CD8-positive, alpha-beta T cell (primary cell): ENCODE measurements at regions of chr7 and their contacts with region 1.

Region 1: GRCh38 chr7:143408686-143409561 is at the start of gene EPHA1:
- DNase-seq: peak; percentile 14 to 77 (median 52)
- ATAC-seq: peak; percentile 71
- H3K4me3 ChIP-seq: peak within 1 kb of the TSS; percentile 56 to 58
- H3K4me3 Mint-ChIP-seq: peak within 1 kb of the TSS; percentile 95
- H3K27ac ChIP-seq: peak within 1 kb of the TSS; percentile 22 to 38
- H3K27ac Mint-ChIP-seq: peak within 1 kb of the TSS; percentile 91
- H3K4me1 ChIP-seq: peaks cover 48% of the 10 kb centered on the region
- H3K4me1 Mint-ChIP-seq: peaks cover 57% of the 10 kb centered on the region
- H3K27me3 ChIP-seq: peaks cover 0 to 2% of the 10 kb centered on the region in 2 experiments
- H3K27me3 Mint-ChIP-seq: no peaks in the 10 kb centered on the region
- CTCF ChIP-seq: no peak
- total RNA-seq, gene EPHA1: 8.3 to 13.1 TPM

Region 2: GRCh38 chr7:143287935-143288826 is 120.7 kb before region 1 on chr7 and contains the start of gene CASP2:
- CTCF ChIA-PET with region 1: interaction called, 3 read pairs
- POLR2A ChIA-PET with region 1: interaction called, 3 read pairs
- intact Hi-C with region 1: loop called in 1 of 2 experiments (anchors 5 kb)
- DNase-seq: peak; percentile 96 to 100 (median 99)
- ATAC-seq: peak; percentile 96
- H3K4me3 ChIP-seq: peak within 1 kb of the TSS; percentile 91 to 95
- H3K4me3 Mint-ChIP-seq: peak within 1 kb of the TSS; percentile 93
- H3K27ac ChIP-seq: peak within 1 kb of the TSS; percentile 64 to 72
- H3K27ac Mint-ChIP-seq: peak within 1 kb of the TSS; percentile 91
- H3K4me1 ChIP-seq: peaks cover 40% of the 10 kb centered on the region
- H3K4me1 Mint-ChIP-seq: peaks cover 53% of the 10 kb centered on the region
- H3K27me3 ChIP-seq: no peaks in the 10 kb centered on the region
- H3K27me3 Mint-ChIP-seq: no peaks in the 10 kb centered on the region
- CTCF ChIP-seq: peak; percentile 31
- total RNA-seq, gene CASP2: 16.0 to 19.1 TPM

Region 3: DNA sequence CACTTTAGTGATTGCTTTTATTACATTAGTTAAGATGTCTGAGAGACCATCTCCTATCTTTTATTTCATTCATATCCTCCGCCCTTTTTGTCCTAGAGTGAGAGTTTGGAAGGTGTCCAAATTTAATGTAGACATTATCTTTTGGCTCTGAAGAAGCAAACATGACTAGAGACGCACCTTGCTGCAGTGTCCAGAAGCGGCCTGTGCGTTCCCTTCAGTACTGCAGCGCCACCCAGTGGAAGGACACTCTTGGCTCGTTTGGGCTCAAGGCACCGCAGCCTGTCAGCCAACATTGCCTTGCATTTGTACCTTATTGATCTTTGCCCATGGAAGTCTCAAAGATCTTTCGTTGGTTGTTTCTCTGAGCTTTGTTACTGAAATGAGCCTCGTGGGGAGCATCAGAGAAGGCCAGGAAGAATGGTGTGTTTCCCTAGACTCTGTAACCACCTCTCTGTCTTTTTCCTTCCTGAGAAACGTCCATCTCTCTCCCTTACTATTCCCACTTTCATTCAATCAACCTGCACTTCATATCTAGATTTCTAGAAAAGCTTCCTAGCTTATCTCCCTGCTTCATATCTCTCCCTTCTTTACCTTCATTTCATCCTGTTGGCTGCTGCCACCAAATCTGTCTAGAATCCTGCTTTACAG is 103.4 kb before region 1 on chr7:
- CTCF ChIA-PET with region 1: interaction called, 4 read pairs
- POLR2A ChIA-PET with region 1: no interaction called
- intact Hi-C with region 1: loop called (anchors 5 kb)
- DNase-seq: peak; percentile 38 to 78 (median 71)
- ATAC-seq: peak; percentile 77
- H3K4me3 ChIP-seq: no peak overlapping the region
- H3K4me3 Mint-ChIP-seq: no peak overlapping the region
- H3K27ac ChIP-seq: no peak overlapping the region
- H3K27ac Mint-ChIP-seq: peak overlapping the region; percentile 39
- H3K4me1 ChIP-seq: peaks cover 3% of the 10 kb centered on the region
- H3K4me1 Mint-ChIP-seq: peaks cover 22% of the 10 kb centered on the region
- H3K27me3 ChIP-seq: no peaks in the 10 kb centered on the region
- H3K27me3 Mint-ChIP-seq: no peaks in the 10 kb centered on the region
- CTCF ChIP-seq: peak; percentile 58

Region 4: DNA sequence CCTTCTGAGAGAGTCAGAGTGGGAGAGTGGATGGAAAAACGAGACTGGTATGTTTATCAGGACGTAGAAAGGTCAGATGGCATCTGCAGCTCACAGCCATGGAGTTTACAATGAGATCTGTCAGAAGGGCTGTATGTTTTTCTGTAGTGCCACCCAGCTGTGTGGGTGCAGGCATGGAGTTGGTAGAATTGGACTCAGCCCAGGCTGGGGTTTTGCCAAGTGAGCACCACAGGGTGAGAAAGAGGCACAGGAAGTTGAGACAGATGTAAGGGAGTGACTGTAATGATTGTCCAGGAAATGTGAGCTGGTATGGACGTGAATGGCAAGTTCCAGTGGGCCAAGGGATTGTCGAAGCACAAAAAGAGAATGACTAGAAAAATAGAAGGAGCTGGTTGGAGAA is 36.9 kb before region 1 on chr7:
- CTCF ChIA-PET with region 1: interaction called, 13 read pairs
- POLR2A ChIA-PET with region 1: interaction called, 10 read pairs
- intact Hi-C with region 1: no loop called
- DNase-seq: peak; percentile 36 to 81 (median 71)
- ATAC-seq: peak; percentile 33
- H3K4me3 ChIP-seq: no peak overlapping the region
- H3K4me3 Mint-ChIP-seq: peak overlapping the region; percentile 24
- H3K27ac ChIP-seq: peak overlapping the region in 1 of 2 experiments; percentile 36
- H3K27ac Mint-ChIP-seq: peak overlapping the region; percentile 75
- H3K4me1 ChIP-seq: peaks cover 58% of the 10 kb centered on the region
- H3K4me1 Mint-ChIP-seq: peaks cover 55% of the 10 kb centered on the region
- H3K27me3 ChIP-seq: no peaks in the 10 kb centered on the region
- H3K27me3 Mint-ChIP-seq: no peaks in the 10 kb centered on the region
- CTCF ChIP-seq: peak; percentile 18

Region 5: DNA sequence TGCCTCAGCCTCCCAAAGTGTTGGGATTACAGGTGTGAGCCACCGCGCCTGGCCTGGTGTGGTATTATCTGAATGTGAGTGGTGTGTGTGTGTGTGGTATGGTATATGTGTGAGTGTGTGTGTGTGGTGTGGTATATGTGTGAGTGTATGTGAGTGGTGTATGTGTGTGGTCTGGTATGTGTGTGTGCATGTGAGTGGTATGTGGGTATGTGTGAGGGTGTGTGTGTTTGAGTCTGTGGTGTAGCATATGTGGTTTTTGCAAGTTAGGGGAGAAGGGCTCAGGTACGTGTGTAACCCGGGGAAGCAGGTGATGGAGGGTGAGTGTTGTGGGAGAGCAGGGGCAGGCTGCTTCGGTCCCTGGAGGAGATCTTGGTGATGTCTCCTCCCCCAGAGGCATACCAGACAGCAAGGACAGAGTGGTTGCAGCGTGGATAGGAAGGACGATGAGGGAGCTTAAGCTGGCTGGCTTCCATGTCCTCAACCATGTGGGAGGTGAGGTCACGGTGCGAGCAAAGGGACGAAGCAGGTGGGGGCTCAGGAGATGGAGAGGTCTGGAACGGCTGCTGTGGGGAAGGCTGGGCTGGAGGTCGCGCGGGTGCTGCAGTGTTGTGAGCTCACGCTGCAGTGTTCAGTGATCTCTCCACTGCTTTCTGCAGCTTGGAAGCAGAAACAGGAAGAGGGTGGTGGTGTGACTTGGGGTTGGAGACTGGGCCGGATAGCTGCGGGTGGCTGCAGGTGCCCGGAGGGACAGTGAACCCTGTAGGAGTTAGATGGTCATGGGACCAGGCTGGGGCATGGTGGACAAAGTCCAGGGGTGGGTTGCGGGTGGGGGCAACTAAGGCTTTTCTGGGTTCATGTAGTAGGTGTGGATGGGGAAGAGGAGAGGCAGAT is 22.8 kb before region 1 on chr7:
- CTCF ChIA-PET with region 1: interaction called, 22 read pairs
- POLR2A ChIA-PET with region 1: interaction called, 31 read pairs
- intact Hi-C with region 1: no loop called
- DNase-seq: peak in 8 of 9 experiments; percentile 33 to 83 (median 56)
- ATAC-seq: peak; percentile 52
- H3K4me3 ChIP-seq: peak overlapping the region; percentile 10 to 21
- H3K4me3 Mint-ChIP-seq: no peak overlapping the region
- H3K27ac ChIP-seq: peak overlapping the region; percentile 50 to 52
- H3K27ac Mint-ChIP-seq: no peak overlapping the region
- H3K4me1 ChIP-seq: peaks cover 60% of the 10 kb centered on the region
- H3K4me1 Mint-ChIP-seq: peaks cover 16% of the 10 kb centered on the region
- H3K27me3 ChIP-seq: no peaks in the 10 kb centered on the region
- H3K27me3 Mint-ChIP-seq: no peaks in the 10 kb centered on the region
- CTCF ChIP-seq: no peak

Region 6: DNA sequence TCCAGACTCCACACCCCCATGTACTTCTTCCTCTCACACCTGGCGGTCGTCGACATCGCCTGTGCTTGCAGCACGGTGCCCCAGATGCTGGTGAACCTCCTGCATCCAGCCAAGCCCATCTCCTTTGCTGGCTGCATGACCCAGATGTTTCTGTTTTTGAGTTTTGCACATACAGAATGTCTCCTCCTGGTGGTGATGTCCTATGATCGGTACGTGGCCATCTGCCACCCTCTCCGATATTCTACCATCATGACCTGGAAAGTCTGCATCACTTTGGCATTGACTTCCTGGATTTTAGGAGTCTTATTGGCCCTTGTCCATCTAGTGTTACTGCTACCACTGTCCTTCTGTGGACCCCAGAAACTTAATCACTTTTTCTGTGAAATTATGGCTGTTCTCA is 665.4 kb after region 1 on chr7:
- CTCF ChIA-PET with region 1: no interaction called
- POLR2A ChIA-PET with region 1: no interaction called
- intact Hi-C with region 1: no loop called
- DNase-seq: no peak
- ATAC-seq: no peak
- H3K4me3 ChIP-seq: no peak overlapping the region
- H3K4me3 Mint-ChIP-seq: no peak overlapping the region
- H3K27ac ChIP-seq: no peak overlapping the region
- H3K27ac Mint-ChIP-seq: no peak overlapping the region
- H3K4me1 ChIP-seq: no peaks in the 10 kb centered on the region
- H3K4me1 Mint-ChIP-seq: no peaks in the 10 kb centered on the region
- H3K27me3 ChIP-seq: no peaks in the 10 kb centered on the region
- H3K27me3 Mint-ChIP-seq: peaks cover 4% of the 10 kb centered on the region
- CTCF ChIP-seq: no peak